ENCODE measurements at regions of chr10 and their contacts with region 1.

Region 1: GRCh38 chr10:75682649-75683557 is 251.5 kb downstream of the LRMDA start:
- DNase-seq: peak; percentile 84
- H3K4me3 ChIP-seq: no peak overlapping the region
- H3K27ac ChIP-seq: peak overlapping the region; percentile 40 to 75 (median 72)
- H3K4me1 ChIP-seq: peaks cover 0 to 36% (median 24%) of the 10 kb centered on the region in 4 donors
- H3K27me3 ChIP-seq: no peaks in the 10 kb centered on the region
- CTCF ChIP-seq: no peak
- EP300 ChIP-seq: peak in 1 of 4 donors; percentile 1
- POLR2A ChIP-seq: no peak

Region 2: DNA sequence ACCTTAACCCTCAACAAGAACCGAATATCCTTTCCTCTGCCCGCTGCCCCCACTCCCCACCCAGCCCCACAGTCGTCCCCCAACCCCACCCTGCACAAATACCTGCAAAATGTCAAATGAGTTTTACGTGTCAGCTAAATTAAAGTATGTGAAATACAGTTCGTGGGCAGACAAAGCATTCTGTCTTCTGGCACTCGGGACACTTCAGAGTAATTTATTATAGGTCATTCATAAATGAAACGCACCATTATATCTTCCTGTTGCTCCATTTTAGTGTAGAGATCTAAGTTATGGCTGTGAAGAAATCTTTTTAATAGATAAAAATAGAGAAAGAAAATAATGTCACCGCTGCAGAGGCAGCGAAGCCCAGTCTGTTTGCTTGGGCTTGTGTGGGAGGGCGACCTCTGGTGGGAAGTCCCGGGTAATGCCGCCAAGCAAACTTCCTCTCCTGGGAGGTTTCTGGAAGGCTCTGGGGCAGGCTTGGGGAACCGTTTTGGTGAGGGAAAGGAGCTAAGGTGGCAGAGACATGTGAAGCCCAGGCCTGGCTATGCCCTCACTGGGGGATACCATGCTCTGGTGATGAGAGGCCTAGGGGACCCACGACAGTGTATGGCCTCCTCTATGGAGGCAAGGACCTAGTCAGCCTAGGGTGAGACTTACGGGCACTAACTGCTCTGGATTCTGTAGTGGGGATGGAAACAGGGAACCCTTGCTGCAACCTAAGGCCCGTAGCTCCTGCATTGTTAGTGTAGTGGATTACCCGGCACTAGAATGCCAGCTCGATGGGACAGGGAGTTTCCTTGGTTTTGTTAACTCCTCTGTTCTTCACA is 353.4 kb after region 1 on chr10:
- intact Hi-C with region 1: loop called (anchors 10 kb)
- DNase-seq: peak; percentile 90
- H3K4me3 ChIP-seq: peak overlapping the region in 3 of 4 donors; percentile 8 to 19 (median 14)
- H3K27ac ChIP-seq: peak overlapping the region; percentile 46 to 58 (median 53)
- H3K4me1 ChIP-seq: peaks cover 2 to 37% (median 25%) of the 10 kb centered on the region in 4 donors
- H3K27me3 ChIP-seq: no peaks in the 10 kb centered on the region
- CTCF ChIP-seq: peak; percentile 80 to 97 (median 90)
- EP300 ChIP-seq: no peak
- POLR2A ChIP-seq: no peak

Measured in sigmoid colon (tissue), 7 donors.